ENCODE measurements at regions of chr11 and their contacts with region 1.

Region 1: GRCh38 chr11:111982019-111982464 is 43.2 kb upstream of the DLAT start:
- DNase-seq: peak; percentile 57 to 84 (median 65)
- ATAC-seq: peak; percentile 95
- H3K4me3 ChIP-seq: no peak overlapping the region
- H3K27ac ChIP-seq: peak overlapping the region; percentile 62; the same call in 1 of the 3 replicates
- H3K4me1 ChIP-seq: peaks cover 8 to 28% of the 10 kb centered on the region in 2 experiments
- H3K27me3 ChIP-seq: no peaks in the 10 kb centered on the region
- CTCF ChIP-seq: peak; percentile 83 to 91 (median 85)
- EP300 ChIP-seq: no peak
- POLR2A ChIP-seq: no peak
- RAD21 ChIP-seq: peak; percentile 78 to 86

Region 2: GRCh38 chr11:111932611-111932950 is 49.5 kb before region 1 on chr11:
- CTCF ChIA-PET with region 1: interaction called, 10 read pairs
- POLR2A ChIA-PET with region 1: no interaction called
- in situ Hi-C with region 1: no loop called
- intact Hi-C with region 1: loop called (anchors 1 kb)
- DNase-seq: no peak
- ATAC-seq: no peak
- H3K4me3 ChIP-seq: no peak overlapping the region
- H3K27ac ChIP-seq: no peak overlapping the region
- H3K4me1 ChIP-seq: peaks cover 15 to 21% of the 10 kb centered on the region in 2 experiments
- H3K27me3 ChIP-seq: no peaks in the 10 kb centered on the region
- CTCF ChIP-seq: no peak
- EP300 ChIP-seq: no peak
- POLR2A ChIP-seq: no peak
- RAD21 ChIP-seq: no peak

Region 3: GRCh38 chr11:112024773-112025678 is 43.0 kb after region 1 on chr11 and contains the start of gene DLAT:
- CTCF ChIA-PET with region 1: no interaction called
- POLR2A ChIA-PET with region 1: interaction called, 4 read pairs
- in situ Hi-C with region 1: no loop called
- intact Hi-C with region 1: loop called (anchors 2 kb)
- DNase-seq: peak; percentile 86 to 95 (median 87)
- ATAC-seq: peak; percentile 90
- H3K4me3 ChIP-seq: peak within 1 kb of the TSS; percentile 89
- H3K27ac ChIP-seq: peak within 1 kb of the TSS; percentile 87
- H3K4me1 ChIP-seq: peaks cover 6 to 13% of the 10 kb centered on the region in 2 experiments; a peak in 3 of 5 replicates
- H3K27me3 ChIP-seq: no peaks in the 10 kb centered on the region
- CTCF ChIP-seq: no peak
- EP300 ChIP-seq: no peak; the same call in 1 of the 2 replicates
- POLR2A ChIP-seq: peak; percentile 97
- RAD21 ChIP-seq: 0 out of 4 replicates have a peak, but pooled peaks of 1 of the 2 experiments have one; percentile 13
- polyA plus RNA-seq, gene DLAT: 41.7 to 47.6 TPM

Region 4: GRCh38 chr11:112665291-112665690 is 683.2 kb after region 1 on chr11:
- CTCF ChIA-PET with region 1: no interaction called
- POLR2A ChIA-PET with region 1: no interaction called
- in situ Hi-C with region 1: no loop called
- intact Hi-C with region 1: no loop called
- DNase-seq: no peak
- ATAC-seq: no peak
- H3K4me3 ChIP-seq: no peak overlapping the region
- H3K27ac ChIP-seq: no peak overlapping the region
- H3K4me1 ChIP-seq: no peaks in the 10 kb centered on the region
- H3K27me3 ChIP-seq: no peaks in the 10 kb centered on the region
- CTCF ChIP-seq: no peak
- EP300 ChIP-seq: no peak
- POLR2A ChIP-seq: no peak
- RAD21 ChIP-seq: no peak